WTC11 (cell line): ENCODE measurements at regions of chr3 and their contacts with region 1.

Region 1: GRCh38 chr3:49539659-49540560 is 14.4 kb upstream of the BSN start:
- DNase-seq: peak; percentile 97
- ATAC-seq: peak; percentile 86
- H3K4me3 Mint-ChIP-seq: peak overlapping the region; percentile 72
- H3K27ac Mint-ChIP-seq: 0 out of 2 replicates have a peak overlapping the region, but pooled peaks have one; percentile 41
- H3K4me1 Mint-ChIP-seq: peaks cover 19% of the 10 kb centered on the region
- H3K27me3 Mint-ChIP-seq: peaks cover 23% of the 10 kb centered on the region
- CTCF ChIP-seq: peak; percentile 80

Region 2: GRCh38 chr3:49339945-49340800 is 199.7 kb before region 1 on chr3 and contains the start of gene USP4:
- CTCF ChIA-PET with region 1: interaction called, 18 read pairs
- POLR2A ChIA-PET with region 1: no interaction called
- DNase-seq: peak; percentile 75
- ATAC-seq: peak; percentile 83
- H3K4me3 Mint-ChIP-seq: peak within 1 kb of the TSS; percentile 88
- H3K27ac Mint-ChIP-seq: peak within 1 kb of the TSS; percentile 90
- H3K4me1 Mint-ChIP-seq: peaks cover 12% of the 10 kb centered on the region
- H3K27me3 Mint-ChIP-seq: no peaks in the 10 kb centered on the region
- CTCF ChIP-seq: no peak
- total RNA-seq, gene USP4: 29.1 to 38.5 TPM (median 36.6 TPM) in 3 replicates

Region 3: GRCh38 chr3:49469936-49470713 is 69.8 kb before region 1 on chr3 and contains the start of gene DAG1:
- CTCF ChIA-PET with region 1: interaction called, 30 read pairs
- POLR2A ChIA-PET with region 1: interaction called, 7 read pairs
- DNase-seq: peak; percentile 99
- ATAC-seq: peak; percentile 89
- H3K4me3 Mint-ChIP-seq: peak within 1 kb of the TSS; percentile 95
- H3K27ac Mint-ChIP-seq: peak within 1 kb of the TSS; percentile 100
- H3K4me1 Mint-ChIP-seq: peaks cover 27% of the 10 kb centered on the region
- H3K27me3 Mint-ChIP-seq: no peaks in the 10 kb centered on the region
- CTCF ChIP-seq: no peak
- total RNA-seq, gene DAG1: 113 to 119 TPM (median 115 TPM) in 3 replicates

Region 4: GRCh38 chr3:49566312-49566711 is 26.4 kb after region 1 on chr3:
- CTCF ChIA-PET with region 1: interaction called, 56 read pairs
- POLR2A ChIA-PET with region 1: no interaction called
- DNase-seq: no peak
- ATAC-seq: peak; percentile 46; the same call in 1 of the 2 replicates
- H3K4me3 Mint-ChIP-seq: no peak overlapping the region
- H3K27ac Mint-ChIP-seq: no peak overlapping the region
- H3K4me1 Mint-ChIP-seq: peaks cover 16% of the 10 kb centered on the region
- H3K27me3 Mint-ChIP-seq: no peaks in the 10 kb centered on the region
- CTCF ChIP-seq: no peak

Region 5: DNA sequence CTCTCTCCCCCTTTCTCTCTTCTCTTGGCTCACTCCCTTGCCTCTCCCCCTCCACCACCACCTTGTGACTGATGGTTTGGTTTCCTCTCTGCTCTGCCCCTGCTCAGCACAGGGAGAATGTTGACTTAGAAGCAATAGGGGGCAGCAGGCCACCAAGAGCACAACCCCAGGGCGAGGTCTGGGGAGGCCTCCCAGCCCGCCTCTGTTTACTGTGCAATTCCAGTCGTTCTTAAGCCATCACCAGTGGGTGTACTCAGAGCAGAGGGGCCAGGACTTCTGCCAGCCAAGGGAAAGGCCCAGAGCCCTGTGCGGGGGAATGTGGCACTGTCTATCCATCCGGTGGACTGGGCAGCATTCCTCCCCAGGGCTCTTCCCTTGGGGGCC is 128.5 kb after region 1 on chr3:
- CTCF ChIA-PET with region 1: interaction called, 304 read pairs
- POLR2A ChIA-PET with region 1: interaction called, 27 read pairs
- DNase-seq: no peak
- ATAC-seq: no peak
- H3K4me3 Mint-ChIP-seq: no peak overlapping the region
- H3K27ac Mint-ChIP-seq: peak overlapping the region; percentile 21; the same call in 1 of the 2 replicates
- H3K4me1 Mint-ChIP-seq: peaks cover 30% of the 10 kb centered on the region
- H3K27me3 Mint-ChIP-seq: no peaks in the 10 kb centered on the region
- CTCF ChIP-seq: no peak

Region 6: GRCh38 chr3:49723628-49724551 is 184.0 kb after region 1 on chr3 and contains the start of gene GMPPB:
- CTCF ChIA-PET with region 1: interaction called, 23 read pairs
- POLR2A ChIA-PET with region 1: interaction called, 7 read pairs
- DNase-seq: peak; percentile 97
- ATAC-seq: peak; percentile 79
- H3K4me3 Mint-ChIP-seq: peak within 1 kb of the TSS; percentile 91
- H3K27ac Mint-ChIP-seq: peak within 1 kb of the TSS; percentile 98
- H3K4me1 Mint-ChIP-seq: peaks cover 11% of the 10 kb centered on the region
- H3K27me3 Mint-ChIP-seq: no peaks in the 10 kb centered on the region
- CTCF ChIP-seq: no peak
- total RNA-seq, gene GMPPB: 23.7 to 28.7 TPM (median 28.0 TPM) in 3 replicates

Region 7: DNA sequence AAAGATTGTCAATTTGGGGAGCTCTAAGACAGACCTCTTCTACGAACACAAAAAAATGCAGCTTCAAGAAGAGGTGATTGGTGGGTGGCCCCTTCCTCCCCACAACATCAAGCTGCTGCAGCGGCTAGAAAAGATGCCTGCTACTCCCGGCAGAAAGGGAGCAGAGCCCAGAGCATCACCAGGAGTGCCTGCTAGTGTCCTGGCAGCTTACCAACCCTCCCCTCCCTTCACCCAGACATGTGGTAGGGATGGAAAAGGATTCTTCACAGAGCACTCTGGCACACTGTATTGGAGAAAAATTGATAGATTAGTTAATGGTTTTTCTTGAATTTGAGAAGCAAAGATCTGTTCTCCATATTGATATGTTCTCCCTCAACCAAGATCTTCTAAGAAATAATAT is 235.6 kb after region 1 on chr3:
- CTCF ChIA-PET with region 1: no interaction called
- POLR2A ChIA-PET with region 1: no interaction called
- DNase-seq: no peak
- ATAC-seq: no peak
- H3K4me3 Mint-ChIP-seq: no peak overlapping the region
- H3K27ac Mint-ChIP-seq: peak overlapping the region; percentile 60; the same call in 1 of the 2 replicates
- H3K4me1 Mint-ChIP-seq: no peaks in the 10 kb centered on the region
- H3K27me3 Mint-ChIP-seq: no peaks in the 10 kb centered on the region
- CTCF ChIP-seq: no peak